CD14-positive monocyte (primary cell): ENCODE measurements at regions of chr12 and their contacts with region 1.

Region 1: DNA sequence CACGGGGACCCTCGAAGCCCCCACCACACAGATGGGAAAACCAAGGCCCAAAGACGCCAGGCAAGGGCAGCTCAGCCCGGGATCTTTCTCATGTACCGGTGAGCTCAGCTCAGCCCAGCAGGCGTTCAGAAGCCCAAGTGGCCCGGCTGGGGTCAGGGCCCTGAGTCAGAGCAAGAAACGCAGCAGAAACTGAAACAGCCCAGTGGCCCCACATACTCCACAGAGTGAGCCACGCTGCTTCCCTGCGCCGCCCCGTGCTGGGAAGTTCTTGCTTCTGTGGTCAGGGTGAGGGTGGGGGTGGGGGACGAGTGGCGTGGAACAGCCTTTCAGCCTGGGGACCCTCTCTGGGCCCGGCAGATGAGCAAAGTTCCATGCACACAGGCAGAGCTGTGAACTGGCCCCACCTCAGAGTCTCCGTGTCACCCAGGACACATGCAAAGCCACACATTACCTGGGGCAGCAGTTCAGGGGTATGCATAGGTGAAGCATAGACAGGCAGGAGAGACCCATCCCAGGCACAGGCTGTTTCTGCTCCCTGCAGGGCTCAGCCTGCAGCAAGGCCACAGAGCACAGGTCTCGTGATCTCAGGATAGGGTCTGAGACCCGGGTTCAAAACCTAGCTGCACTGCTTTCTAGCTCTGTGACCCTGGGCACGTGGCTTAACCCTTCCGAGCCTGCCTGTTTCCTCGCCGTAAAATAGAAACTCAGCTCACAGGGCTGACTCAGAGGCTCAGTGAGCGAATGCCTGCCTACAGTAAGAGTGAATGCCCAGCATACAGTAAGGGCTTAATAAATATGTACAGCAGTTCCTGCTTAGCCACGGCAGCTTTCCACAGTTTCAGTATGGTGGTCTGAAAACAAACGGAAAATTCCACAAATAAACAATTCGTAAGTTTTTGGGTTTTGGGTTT is 21.6 kb downstream of the NCOR2 start:
- DNase-seq: peak; percentile 80 to 86 (median 82)
- H3K4me3 ChIP-seq: peak overlapping the region in 1 of 3 experiments; percentile 45
- H3K4me3 Mint-ChIP-seq: peak overlapping the region in 1 of 2 donors; percentile 54
- H3K27ac ChIP-seq: peak overlapping the region; percentile 59 to 72
- H3K27ac Mint-ChIP-seq: peak overlapping the region; percentile 65 to 90 (median 84)
- H3K4me1 ChIP-seq: peaks cover 70 to 78% of the 10 kb centered on the region in 2 donors
- H3K4me1 Mint-ChIP-seq: peaks cover 75% of the 10 kb centered on the region
- H3K27me3 ChIP-seq: no peaks in the 10 kb centered on the region
- H3K27me3 Mint-ChIP-seq: peaks cover 0 to 1% (median 0%) of the 10 kb centered on the region in 3 donors
- CTCF ChIP-seq: no peak

Region 2: DNA sequence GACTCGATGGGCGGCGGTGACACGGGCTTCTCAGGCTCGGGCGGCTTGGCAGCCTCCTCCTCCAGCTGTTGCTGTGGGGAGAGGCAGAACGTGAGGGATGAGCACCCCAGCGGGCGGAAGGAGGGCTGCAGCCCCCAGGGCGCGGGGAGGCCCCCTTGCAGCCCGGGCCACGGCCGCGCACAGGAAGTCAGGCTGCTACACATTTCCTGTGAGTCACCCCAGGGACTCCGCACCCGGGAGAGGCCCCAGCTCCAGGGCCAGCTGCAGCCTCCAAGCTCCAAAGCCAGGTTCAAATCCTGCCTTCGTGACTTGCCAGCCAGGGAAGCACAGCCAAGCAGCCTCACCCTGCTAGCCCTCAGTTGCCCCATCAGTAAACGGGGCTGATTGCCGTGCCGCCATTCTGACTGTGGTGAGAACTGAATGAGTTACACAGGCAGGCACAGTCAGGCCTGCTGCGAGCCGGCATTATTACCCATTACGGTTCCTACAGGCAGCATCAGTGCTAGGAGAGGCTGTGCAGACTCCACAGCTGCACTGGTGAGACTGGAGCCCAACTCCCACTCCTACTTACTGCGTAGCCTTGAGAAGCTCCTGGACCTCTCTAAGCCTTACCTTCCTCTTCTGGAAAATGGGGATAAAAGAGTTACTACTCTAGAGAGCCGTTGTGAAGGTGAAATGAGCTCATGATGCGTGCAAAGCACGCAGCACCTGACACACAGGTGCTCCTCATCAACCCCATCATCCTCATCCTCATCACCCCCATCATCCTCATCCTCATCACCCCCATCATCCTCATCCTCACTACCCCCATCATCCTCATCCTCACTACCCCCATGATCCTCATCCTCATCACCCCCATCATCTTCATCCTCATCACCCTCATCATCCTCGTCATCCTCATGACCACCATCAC is 79.3 kb before region 1 on chr12:
- intact Hi-C with region 1: loop called in 1 of 2 experiments (anchors 10 kb)
- DNase-seq: peak; percentile 95 to 98 (median 96)
- H3K4me3 ChIP-seq: peak overlapping the region in 1 of 3 experiments; percentile 52
- H3K4me3 Mint-ChIP-seq: peak overlapping the region; percentile 60 to 68
- H3K27ac ChIP-seq: peak overlapping the region; percentile 37 to 70
- H3K27ac Mint-ChIP-seq: peak overlapping the region; percentile 62 to 93 (median 87)
- H3K4me1 ChIP-seq: peaks cover 33 to 37% of the 10 kb centered on the region in 2 donors
- H3K4me1 Mint-ChIP-seq: peaks cover 37% of the 10 kb centered on the region
- H3K27me3 ChIP-seq: no peaks in the 10 kb centered on the region
- H3K27me3 Mint-ChIP-seq: peaks cover 0 to 3% (median 0%) of the 10 kb centered on the region in 3 donors
- CTCF ChIP-seq: peak; percentile 61

Region 3: DNA sequence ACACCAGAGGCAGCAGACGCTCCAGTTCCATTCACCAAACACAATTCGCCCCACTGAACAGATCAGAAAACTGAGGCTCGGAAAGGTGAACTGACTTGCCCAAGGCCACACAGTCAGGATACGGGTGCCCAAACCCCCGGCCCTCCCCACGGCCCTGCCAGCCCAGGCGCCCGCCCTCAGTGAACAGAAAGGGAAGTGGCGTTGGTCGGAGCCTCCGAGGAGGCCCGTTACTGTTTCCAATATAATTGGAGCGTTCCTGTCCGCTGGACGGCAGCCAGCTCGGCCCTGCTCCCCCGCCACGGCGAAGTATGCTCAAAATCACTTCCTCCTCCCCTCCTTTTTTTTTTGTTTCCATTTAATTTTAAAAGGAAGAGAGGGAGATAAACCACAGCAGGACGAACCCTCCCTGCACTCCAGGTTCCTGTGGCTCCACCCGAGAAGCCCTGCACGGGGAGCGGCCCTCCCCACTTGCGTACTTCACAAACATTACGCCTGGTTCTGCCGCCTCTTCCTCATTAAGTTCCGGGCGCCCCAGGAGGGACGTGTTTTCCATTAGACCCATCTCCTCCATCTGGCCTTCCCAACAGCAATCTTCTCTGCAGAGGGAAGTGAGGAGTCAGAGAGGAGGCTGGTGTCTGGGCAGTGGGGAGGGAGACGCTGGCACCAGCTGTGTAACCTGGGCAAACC is 39.5 kb before region 1 on chr12:
- intact Hi-C with region 1: loop called (anchors 5 to 10 kb)
- DNase-seq: peak; percentile 71 to 78 (median 75)
- H3K4me3 ChIP-seq: peak overlapping the region in 2 of 3 experiments; percentile 10 to 46
- H3K4me3 Mint-ChIP-seq: peak overlapping the region; percentile 76 to 87
- H3K27ac ChIP-seq: peak overlapping the region; percentile 69 to 70
- H3K27ac Mint-ChIP-seq: peak overlapping the region; percentile 92 to 97 (median 94)
- H3K4me1 ChIP-seq: peaks cover 37 to 58% of the 10 kb centered on the region in 2 donors
- H3K4me1 Mint-ChIP-seq: peaks cover 68% of the 10 kb centered on the region
- H3K27me3 ChIP-seq: no peaks in the 10 kb centered on the region
- H3K27me3 Mint-ChIP-seq: peaks cover 0 to 2% (median 0%) of the 10 kb centered on the region in 3 donors
- CTCF ChIP-seq: no peak